Endothelial cell of umbilical vein (primary cell): ENCODE measurements at regions of chr7 and their contacts with region 1.

Region 1: GRCh38 chr7:85030893-85031292 is 156.0 kb downstream of the SEMA3D start:
- DNase-seq: peak; percentile 50
- H3K4me3 ChIP-seq: no peak overlapping the region
- H3K27ac ChIP-seq: no peak overlapping the region
- H3K4me1 ChIP-seq: peaks cover 2% of the 10 kb centered on the region
- H3K27me3 ChIP-seq: no peaks in the 10 kb centered on the region
- CTCF ChIP-seq: peak; percentile 17 to 19
- POLR2A ChIP-seq: no peak

Region 2: GRCh38 chr7:85306115-85306514 is 275.2 kb after region 1 on chr7:
- CTCF ChIA-PET with region 1: no interaction called
- POLR2A ChIA-PET with region 1: no interaction called
- dilution Hi-C with region 1: no loop called
- intact Hi-C with region 1: loop called (anchors 10 kb)
- DNase-seq: no peak
- H3K4me3 ChIP-seq: no peak overlapping the region
- H3K27ac ChIP-seq: no peak overlapping the region
- H3K4me1 ChIP-seq: no peaks in the 10 kb centered on the region
- H3K27me3 ChIP-seq: peaks cover 0 to 1% of the 10 kb centered on the region in 2 experiments
- CTCF ChIP-seq: no peak
- POLR2A ChIP-seq: no peak

Region 3: GRCh38 chr7:85464042-85464651 is 433.3 kb after region 1 on chr7:
- CTCF ChIA-PET with region 1: interaction called, 30 read pairs
- POLR2A ChIA-PET with region 1: no interaction called
- dilution Hi-C with region 1: no loop called
- intact Hi-C with region 1: loop called (anchors 2 kb)
- DNase-seq: peak; percentile 13
- H3K4me3 ChIP-seq: no peak overlapping the region
- H3K27ac ChIP-seq: no peak overlapping the region
- H3K4me1 ChIP-seq: no peaks in the 10 kb centered on the region
- H3K27me3 ChIP-seq: no peaks in the 10 kb centered on the region
- CTCF ChIP-seq: no peak
- POLR2A ChIP-seq: no peak

Region 4: DNA sequence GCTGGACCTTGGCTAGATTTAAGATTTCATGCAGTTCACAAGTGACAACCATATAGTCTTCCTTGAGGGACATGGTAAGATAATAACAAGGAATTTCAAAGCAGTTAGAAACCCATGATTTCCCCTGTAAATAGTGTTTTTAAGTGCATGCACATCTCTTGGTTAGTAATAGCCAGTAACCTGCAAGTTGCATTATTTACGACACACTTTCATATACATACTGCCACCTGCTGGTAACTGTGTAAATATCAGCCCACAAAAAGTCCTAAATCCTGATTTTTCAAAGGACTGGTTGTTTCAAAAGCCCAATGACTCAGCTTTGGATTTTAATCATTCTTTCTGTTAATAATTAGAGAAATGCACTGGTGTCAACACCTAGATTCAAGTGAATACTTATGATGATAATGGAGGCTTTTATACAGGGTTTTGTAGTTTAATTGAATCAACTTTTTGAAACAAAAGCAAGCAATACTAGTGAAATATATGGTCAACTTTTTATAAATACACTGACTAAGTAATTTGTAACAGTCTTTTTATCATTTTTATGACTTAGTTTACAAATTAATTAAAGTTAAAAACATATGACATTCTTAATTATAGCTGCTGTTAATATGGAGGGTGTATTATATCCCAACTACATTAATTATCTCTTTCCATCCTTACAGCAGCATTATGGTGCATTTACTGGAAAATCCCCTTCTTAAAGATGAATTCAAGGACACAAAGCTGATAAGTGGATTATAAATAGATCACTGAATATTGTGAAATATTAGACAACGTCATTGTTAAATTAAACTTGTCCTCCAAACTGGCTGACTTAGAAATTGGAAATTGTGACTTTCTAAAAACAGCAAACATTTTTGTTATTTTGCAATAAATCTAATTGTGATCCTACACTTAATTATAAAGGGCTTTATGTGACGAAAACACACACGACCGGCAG is 523.6 kb after region 1 on chr7:
- CTCF ChIA-PET with region 1: interaction called, 59 read pairs
- POLR2A ChIA-PET with region 1: no interaction called
- dilution Hi-C with region 1: no loop called
- intact Hi-C with region 1: loop called (anchors 2 kb)
- DNase-seq: peak; percentile 63
- H3K4me3 ChIP-seq: no peak overlapping the region
- H3K27ac ChIP-seq: no peak overlapping the region
- H3K4me1 ChIP-seq: no peaks in the 10 kb centered on the region
- H3K27me3 ChIP-seq: no peaks in the 10 kb centered on the region
- CTCF ChIP-seq: peak; percentile 44 to 49
- POLR2A ChIP-seq: no peak

Region 5: GRCh38 chr7:85695041-85695996 is 664.4 kb after region 1 on chr7:
- CTCF ChIA-PET with region 1: no interaction called
- POLR2A ChIA-PET with region 1: no interaction called
- dilution Hi-C with region 1: no loop called
- intact Hi-C with region 1: no loop called
- DNase-seq: no peak
- H3K4me3 ChIP-seq: no peak overlapping the region
- H3K27ac ChIP-seq: no peak overlapping the region
- H3K4me1 ChIP-seq: no peaks in the 10 kb centered on the region
- H3K27me3 ChIP-seq: no peaks in the 10 kb centered on the region
- CTCF ChIP-seq: no peak
- POLR2A ChIP-seq: no peak

Region 6: GRCh38 chr7:85750454-85750949 is 719.6 kb after region 1 on chr7:
- CTCF ChIA-PET with region 1: interaction called, 30 read pairs
- POLR2A ChIA-PET with region 1: no interaction called
- dilution Hi-C with region 1: no loop called
- intact Hi-C with region 1: loop called (anchors 1 kb)
- DNase-seq: peak; percentile 44
- H3K4me3 ChIP-seq: no peak overlapping the region
- H3K27ac ChIP-seq: no peak overlapping the region
- H3K4me1 ChIP-seq: no peaks in the 10 kb centered on the region
- H3K27me3 ChIP-seq: peaks cover 2 to 5% of the 10 kb centered on the region in 2 experiments
- CTCF ChIP-seq: peak; percentile 74 to 79
- POLR2A ChIP-seq: no peak

Region 7: DNA sequence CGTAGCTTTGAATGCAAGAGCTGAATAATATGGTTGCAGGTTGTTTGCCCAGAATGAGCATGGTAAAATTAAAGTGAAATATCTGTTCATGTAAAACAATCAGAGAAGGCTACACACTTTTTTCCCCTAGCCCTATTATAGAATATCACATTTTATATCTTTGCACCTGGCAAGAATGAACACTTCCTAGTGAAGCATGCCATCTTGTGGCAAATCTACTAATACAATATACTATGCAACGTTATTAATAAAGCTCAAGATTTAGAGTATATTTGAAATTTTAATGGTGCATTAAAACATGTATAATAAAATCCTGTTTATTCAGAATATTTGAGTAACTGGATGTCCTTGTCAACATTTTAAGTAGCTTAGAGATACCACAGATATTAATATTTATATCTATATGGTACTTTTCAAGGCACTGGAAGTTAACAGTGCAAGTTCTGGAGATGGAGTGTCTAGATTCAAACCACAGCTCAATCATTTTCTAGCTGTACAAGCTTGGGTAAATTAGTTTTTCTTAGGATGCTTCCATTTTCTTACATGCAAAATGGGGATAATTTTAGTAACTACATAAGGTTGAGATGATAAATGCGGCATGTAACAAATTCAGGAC is 799.0 kb after region 1 on chr7:
- CTCF ChIA-PET with region 1: interaction called, 85 read pairs
- POLR2A ChIA-PET with region 1: no interaction called
- dilution Hi-C with region 1: no loop called
- intact Hi-C with region 1: loop called (anchors 1 kb)
- DNase-seq: no peak
- H3K4me3 ChIP-seq: no peak overlapping the region
- H3K27ac ChIP-seq: no peak overlapping the region
- H3K4me1 ChIP-seq: no peaks in the 10 kb centered on the region
- H3K27me3 ChIP-seq: no peaks in the 10 kb centered on the region
- CTCF ChIP-seq: no peak
- POLR2A ChIP-seq: no peak

Region 8: DNA sequence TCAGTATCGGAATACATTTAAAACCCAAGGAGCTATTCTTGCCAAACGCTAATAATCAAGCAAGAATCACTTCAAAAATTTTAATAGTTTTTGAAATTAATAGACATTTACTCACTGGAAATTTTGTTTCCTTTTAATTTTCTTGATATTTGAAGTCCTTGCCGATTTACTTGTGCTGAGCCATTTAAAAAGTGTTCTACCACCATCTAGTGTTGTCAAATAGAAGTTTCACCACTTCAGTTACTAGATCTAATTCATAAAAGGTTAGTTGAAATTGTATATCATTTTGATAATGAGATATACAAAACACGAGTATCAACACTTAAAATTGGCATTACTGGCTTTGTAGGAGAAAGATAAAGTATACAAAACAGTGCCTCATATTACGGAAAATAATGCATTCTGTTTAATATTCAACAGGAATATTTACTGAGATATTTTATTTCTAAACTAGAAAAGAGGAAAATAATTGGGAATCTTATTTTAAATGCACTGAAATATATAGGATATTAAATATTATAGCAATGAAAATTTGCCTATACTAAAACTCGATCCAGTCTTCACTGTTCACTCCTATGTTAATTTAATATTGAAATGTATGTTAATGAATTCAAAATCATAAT is 820.8 kb after region 1 on chr7:
- CTCF ChIA-PET with region 1: interaction called, 20 read pairs
- POLR2A ChIA-PET with region 1: no interaction called
- dilution Hi-C with region 1: no loop called
- intact Hi-C with region 1: loop called (anchors 1 kb)
- DNase-seq: peak; percentile 42
- H3K4me3 ChIP-seq: no peak overlapping the region
- H3K27ac ChIP-seq: no peak overlapping the region
- H3K4me1 ChIP-seq: no peaks in the 10 kb centered on the region
- H3K27me3 ChIP-seq: no peaks in the 10 kb centered on the region
- CTCF ChIP-seq: peak; percentile 6 to 11
- POLR2A ChIP-seq: no peak